PC-3 (cell line): ENCODE measurements at regions of chrX and their contacts with region 1.

Region 1: GRCh38 chrX:44244008-44244407 is 99.5 kb downstream of the EFHC2 start:
- DNase-seq: peak; percentile 60
- ATAC-seq: peak; percentile 45
- H3K4me3 ChIP-seq: no peak overlapping the region
- H3K27ac ChIP-seq: no peak overlapping the region
- H3K4me1 ChIP-seq: peaks cover 10% of the 10 kb centered on the region
- H3K27me3 ChIP-seq: no peaks in the 10 kb centered on the region
- CTCF ChIP-seq: peak; percentile 67

Region 2: DNA sequence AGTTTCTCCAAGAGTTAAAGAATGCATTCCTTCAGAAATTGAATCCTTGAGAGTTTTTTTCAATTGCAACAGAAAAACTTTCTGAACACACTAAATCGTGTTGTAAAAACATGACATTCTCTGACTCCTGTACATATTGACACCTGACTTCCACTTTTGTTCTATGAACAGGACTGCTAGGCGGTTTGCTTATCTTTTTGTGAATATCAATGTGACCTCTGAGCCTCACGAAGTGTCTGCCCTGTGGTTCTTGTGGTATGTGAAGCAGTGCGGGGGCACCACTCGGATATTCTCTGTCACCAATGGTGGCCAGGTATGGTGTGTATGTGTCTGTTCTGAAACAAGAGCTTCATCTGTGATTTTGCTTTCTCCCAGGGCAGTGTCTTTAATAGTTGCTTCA is 516.0 kb before region 1 on chrX:
- CTCF ChIA-PET with region 1: no interaction called
- POLR2A ChIA-PET with region 1: no interaction called
- intact Hi-C with region 1: no loop called
- DNase-seq: no peak
- ATAC-seq: no peak
- H3K4me3 ChIP-seq: no peak overlapping the region
- H3K27ac ChIP-seq: no peak overlapping the region
- H3K4me1 ChIP-seq: no peaks in the 10 kb centered on the region
- H3K27me3 ChIP-seq: no peaks in the 10 kb centered on the region
- CTCF ChIP-seq: no peak

Region 3: GRCh38 chrX:43836435-43837184 is 407.4 kb before region 1 on chrX:
- CTCF ChIA-PET with region 1: no interaction called
- POLR2A ChIA-PET with region 1: no interaction called
- intact Hi-C with region 1: loop called (anchors 2 kb)
- DNase-seq: peak; percentile 65
- ATAC-seq: no peak
- H3K4me3 ChIP-seq: no peak overlapping the region
- H3K27ac ChIP-seq: no peak overlapping the region
- H3K4me1 ChIP-seq: peaks cover 13% of the 10 kb centered on the region
- H3K27me3 ChIP-seq: no peaks in the 10 kb centered on the region
- CTCF ChIP-seq: peak; percentile 70

Region 4: GRCh38 chrX:43969504-43970501 is 274.2 kb before region 1 on chrX:
- CTCF ChIA-PET with region 1: no interaction called
- POLR2A ChIA-PET with region 1: no interaction called
- intact Hi-C with region 1: loop called (anchors 5 kb)
- DNase-seq: peak; percentile 38
- ATAC-seq: peak; percentile 42
- H3K4me3 ChIP-seq: no peak overlapping the region
- H3K27ac ChIP-seq: peak overlapping the region; percentile 61
- H3K4me1 ChIP-seq: peaks cover 43% of the 10 kb centered on the region
- H3K27me3 ChIP-seq: no peaks in the 10 kb centered on the region
- CTCF ChIP-seq: no peak

Region 5: DNA sequence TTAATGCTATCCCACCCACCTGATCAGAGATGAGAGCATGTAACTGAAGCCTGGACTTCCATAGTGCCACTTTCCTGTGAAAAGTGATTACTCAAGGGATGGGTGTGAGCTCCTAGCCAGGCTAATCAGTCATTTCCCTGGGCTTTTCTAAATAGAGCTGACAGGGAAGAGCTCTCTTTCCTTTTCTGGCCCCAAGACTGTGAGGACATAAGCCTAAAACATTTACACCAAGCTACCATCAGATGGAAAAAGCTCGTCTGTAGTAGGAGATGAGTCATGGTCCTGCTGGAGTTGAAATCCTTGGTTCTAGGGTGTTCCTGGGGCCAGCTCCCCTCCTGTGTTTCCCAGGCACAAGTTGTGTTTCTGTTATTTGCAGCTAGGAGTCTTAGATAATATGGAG is 218.5 kb before region 1 on chrX:
- CTCF ChIA-PET with region 1: no interaction called
- POLR2A ChIA-PET with region 1: no interaction called
- intact Hi-C with region 1: loop called (anchors 5 kb)
- DNase-seq: peak; percentile 8
- ATAC-seq: no peak; the same call in 1 of the 2 replicates
- H3K4me3 ChIP-seq: no peak overlapping the region
- H3K27ac ChIP-seq: no peak overlapping the region
- H3K4me1 ChIP-seq: no peaks in the 10 kb centered on the region
- H3K27me3 ChIP-seq: no peaks in the 10 kb centered on the region
- CTCF ChIP-seq: no peak

Region 6: GRCh38 chrX:44305921-44306735 is 62.1 kb after region 1 on chrX:
- CTCF ChIA-PET with region 1: no interaction called
- POLR2A ChIA-PET with region 1: no interaction called
- intact Hi-C with region 1: loop called (anchors 10 kb)
- DNase-seq: peak; percentile 95
- ATAC-seq: peak; percentile 94
- H3K4me3 ChIP-seq: peak overlapping the region; percentile 49; the same call in 1 of the 2 replicates
- H3K27ac ChIP-seq: peak overlapping the region; percentile 84
- H3K4me1 ChIP-seq: peaks cover 16% of the 10 kb centered on the region
- H3K27me3 ChIP-seq: no peaks in the 10 kb centered on the region
- CTCF ChIP-seq: no peak